WTC11 (cell line): ENCODE measurements at regions of chr3 and their contacts with region 1.

Region 1: GRCh38 chr3:137110484-137110883 is 152.7 kb downstream of the IL20RB start:
- DNase-seq: no peak
- ATAC-seq: peak; percentile 61
- H3K4me3 Mint-ChIP-seq: no peak overlapping the region
- H3K27ac Mint-ChIP-seq: no peak overlapping the region
- H3K4me1 Mint-ChIP-seq: peaks cover 30% of the 10 kb centered on the region
- H3K27me3 Mint-ChIP-seq: no peaks in the 10 kb centered on the region
- CTCF ChIP-seq: peak; percentile 71

Region 2: DNA sequence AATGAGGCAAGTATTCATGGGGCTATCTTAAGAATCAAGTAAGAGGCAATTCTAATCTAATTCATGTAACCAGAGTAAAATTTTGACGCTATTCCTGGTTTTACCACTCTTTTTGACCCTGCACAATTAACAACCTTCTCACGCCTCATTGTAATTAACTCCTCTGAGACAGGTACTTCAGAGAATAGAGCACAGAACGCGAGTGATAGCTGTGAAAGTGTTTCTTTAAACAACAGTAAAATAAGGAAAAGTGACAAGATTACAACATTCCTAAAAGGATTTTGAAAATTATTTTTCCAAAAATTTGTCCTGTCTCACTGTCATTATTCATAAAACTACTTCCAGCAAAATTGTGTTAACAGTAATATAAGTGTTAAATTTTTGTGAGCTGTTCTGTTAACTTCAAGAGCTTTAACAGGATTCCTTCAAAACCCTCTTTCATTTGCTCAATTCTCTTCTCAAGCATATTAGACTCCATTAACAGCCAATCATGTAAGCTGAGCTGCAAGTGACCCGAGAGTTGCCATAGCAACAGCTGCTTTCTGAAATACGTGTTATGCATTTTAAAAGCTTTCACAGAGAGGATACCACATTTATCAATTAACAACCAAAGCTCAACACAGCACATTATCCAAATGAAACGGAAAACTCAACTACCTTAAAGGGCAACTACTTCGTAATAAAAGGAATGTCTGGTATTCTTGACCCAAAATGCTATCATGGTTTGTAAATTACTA is 451.4 kb before region 1 on chr3:
- CTCF ChIA-PET with region 1: no interaction called
- POLR2A ChIA-PET with region 1: no interaction called
- DNase-seq: no peak
- ATAC-seq: no peak
- H3K4me3 Mint-ChIP-seq: no peak overlapping the region
- H3K27ac Mint-ChIP-seq: no peak overlapping the region
- H3K4me1 Mint-ChIP-seq: peaks cover 13% of the 10 kb centered on the region
- H3K27me3 Mint-ChIP-seq: no peaks in the 10 kb centered on the region
- CTCF ChIP-seq: no peak

Region 3: DNA sequence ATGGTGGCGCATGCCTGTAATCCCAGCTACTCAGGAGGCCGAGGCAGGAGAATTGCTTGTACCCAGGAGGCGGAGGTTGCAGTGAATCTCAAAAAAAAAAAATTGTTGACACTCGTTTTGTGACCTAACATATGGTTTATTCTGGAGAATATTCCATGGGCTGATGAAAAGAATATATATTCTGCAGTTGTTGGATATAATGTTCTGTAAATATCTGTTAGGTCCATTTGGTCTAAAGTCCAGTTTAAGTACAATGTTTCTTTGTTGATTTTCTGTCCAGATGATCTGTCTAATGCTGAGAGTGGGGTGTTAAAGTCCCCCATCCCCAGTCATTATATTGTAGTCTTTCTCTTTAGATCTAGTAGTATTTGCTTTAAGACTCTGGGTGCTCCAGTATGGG is 137.1 kb before region 1 on chr3:
- CTCF ChIA-PET with region 1: no interaction called
- POLR2A ChIA-PET with region 1: no interaction called
- DNase-seq: no peak
- ATAC-seq: no peak
- H3K4me3 Mint-ChIP-seq: no peak overlapping the region
- H3K27ac Mint-ChIP-seq: no peak overlapping the region
- H3K4me1 Mint-ChIP-seq: peaks cover 5% of the 10 kb centered on the region
- H3K27me3 Mint-ChIP-seq: no peaks in the 10 kb centered on the region
- CTCF ChIP-seq: no peak

Region 4: GRCh38 chr3:137032465-137033120 is 77.9 kb before region 1 on chr3:
- CTCF ChIA-PET with region 1: interaction called, 33 read pairs
- POLR2A ChIA-PET with region 1: no interaction called
- DNase-seq: peak; percentile 98
- ATAC-seq: peak; percentile 75
- H3K4me3 Mint-ChIP-seq: peak overlapping the region; percentile 70
- H3K27ac Mint-ChIP-seq: 0 out of 2 replicates have a peak overlapping the region, but pooled peaks have one; percentile 11
- H3K4me1 Mint-ChIP-seq: peaks cover 29% of the 10 kb centered on the region
- H3K27me3 Mint-ChIP-seq: peaks cover 30% of the 10 kb centered on the region
- CTCF ChIP-seq: peak; percentile 96

Region 5: GRCh38 chr3:137121704-137122314 is 11.3 kb after region 1 on chr3:
- CTCF ChIA-PET with region 1: interaction called, 32 read pairs
- POLR2A ChIA-PET with region 1: no interaction called
- DNase-seq: peak; percentile 58
- ATAC-seq: peak; percentile 95
- H3K4me3 Mint-ChIP-seq: no peak overlapping the region
- H3K27ac Mint-ChIP-seq: no peak overlapping the region
- H3K4me1 Mint-ChIP-seq: peaks cover 2% of the 10 kb centered on the region
- H3K27me3 Mint-ChIP-seq: no peaks in the 10 kb centered on the region
- CTCF ChIP-seq: peak; percentile 65

Region 6: DNA sequence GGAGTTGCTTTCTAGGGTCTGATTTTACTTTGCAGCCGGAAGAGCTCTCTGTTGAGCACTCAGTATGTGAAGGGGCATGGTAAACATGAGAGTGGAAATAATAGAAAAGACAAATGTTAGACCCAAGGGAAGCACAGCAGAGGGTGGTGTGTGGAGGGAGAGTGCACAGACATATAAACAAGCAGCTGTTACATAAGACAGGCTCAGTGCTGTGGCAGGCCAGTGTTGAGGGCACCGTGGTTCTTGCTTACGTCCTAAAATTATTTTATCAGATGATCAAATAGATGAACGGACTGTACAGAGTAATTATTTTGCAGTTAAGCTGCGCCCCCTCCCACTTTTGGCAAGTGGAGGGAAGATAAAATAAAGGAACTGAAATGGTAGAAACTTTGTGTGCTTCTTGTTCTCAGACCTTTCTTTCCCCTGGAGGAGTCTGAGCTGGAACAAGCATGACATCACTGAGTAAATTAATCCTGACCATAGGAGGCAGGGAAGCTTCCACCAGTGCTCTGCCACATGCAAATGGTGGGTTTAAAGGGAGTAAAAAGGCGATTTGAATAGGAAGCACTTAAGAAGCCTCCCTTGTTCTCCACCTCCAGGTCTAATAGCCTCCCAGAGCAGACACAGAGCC is 52.9 kb after region 1 on chr3:
- CTCF ChIA-PET with region 1: interaction called, 12 read pairs
- POLR2A ChIA-PET with region 1: no interaction called
- DNase-seq: no peak
- ATAC-seq: peak; percentile 96
- H3K4me3 Mint-ChIP-seq: no peak overlapping the region
- H3K27ac Mint-ChIP-seq: peak overlapping the region; percentile 47
- H3K4me1 Mint-ChIP-seq: peaks cover 30% of the 10 kb centered on the region
- H3K27me3 Mint-ChIP-seq: no peaks in the 10 kb centered on the region
- CTCF ChIP-seq: no peak

Region 7: DNA sequence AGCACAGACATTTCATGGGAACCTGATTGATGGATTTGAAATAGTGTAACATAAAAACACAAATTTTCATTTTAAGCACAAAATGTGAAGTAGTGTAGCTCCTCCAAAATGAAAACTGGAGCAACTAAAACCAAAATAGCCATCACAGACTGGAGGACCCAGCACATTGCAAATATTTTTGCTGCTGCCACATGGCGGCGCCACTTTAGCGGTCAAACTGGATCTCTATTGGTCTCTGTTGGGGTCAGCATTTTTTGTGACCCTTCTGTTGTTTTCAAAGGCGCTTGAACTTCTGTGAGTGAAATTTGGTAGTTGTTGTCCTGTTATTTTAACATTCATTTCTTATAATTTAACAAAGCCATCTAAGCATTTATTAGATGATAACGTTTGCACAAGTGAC is 107.2 kb after region 1 on chr3:
- CTCF ChIA-PET with region 1: interaction called, 12 read pairs
- POLR2A ChIA-PET with region 1: no interaction called
- DNase-seq: peak; percentile 67
- ATAC-seq: peak; percentile 90
- H3K4me3 Mint-ChIP-seq: no peak overlapping the region
- H3K27ac Mint-ChIP-seq: no peak overlapping the region
- H3K4me1 Mint-ChIP-seq: peaks cover 4% of the 10 kb centered on the region; the same call in 1 of the 2 replicates
- H3K27me3 Mint-ChIP-seq: no peaks in the 10 kb centered on the region; the same call in 1 of the 2 replicates
- CTCF ChIP-seq: peak; percentile 39; the same call in 1 of the 2 replicates

Region 8: DNA sequence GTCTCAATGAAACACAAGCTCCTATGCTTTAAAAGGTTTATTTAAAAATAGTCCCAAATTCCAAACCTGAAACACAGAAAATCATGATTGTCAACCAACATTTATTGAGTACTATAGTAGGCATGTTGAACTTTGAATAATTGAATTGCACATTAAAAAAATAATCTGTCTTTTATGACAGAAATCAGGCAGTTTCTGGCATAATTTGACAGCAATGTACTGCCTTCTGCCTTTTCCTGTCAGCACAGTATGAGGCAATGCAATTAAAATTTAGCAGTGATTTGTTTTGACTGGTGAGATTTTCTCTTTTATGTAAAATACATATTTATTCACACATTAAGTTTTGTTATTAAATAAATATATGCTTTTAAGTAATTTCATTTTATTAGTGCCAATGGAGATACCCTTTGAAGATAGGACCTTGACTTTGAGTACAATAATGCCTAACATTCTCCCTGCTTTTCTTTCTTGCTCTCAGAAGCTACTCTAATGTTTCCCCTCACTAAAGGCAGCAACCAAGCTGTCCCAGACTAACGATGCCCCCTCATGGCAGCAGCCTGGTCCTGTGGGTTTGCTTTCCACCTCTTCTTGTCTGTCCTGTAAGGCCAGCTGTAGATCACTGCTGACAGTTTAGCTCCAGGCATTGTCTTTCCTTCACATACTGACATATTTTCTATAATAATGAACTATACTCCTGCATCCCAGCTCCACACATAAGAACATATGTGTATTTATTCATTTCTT is 194.0 kb after region 1 on chr3:
- CTCF ChIA-PET with region 1: interaction called, 20 read pairs
- POLR2A ChIA-PET with region 1: no interaction called
- DNase-seq: peak; percentile 54
- ATAC-seq: peak; percentile 64
- H3K4me3 Mint-ChIP-seq: no peak overlapping the region
- H3K27ac Mint-ChIP-seq: no peak overlapping the region
- H3K4me1 Mint-ChIP-seq: no peaks in the 10 kb centered on the region
- H3K27me3 Mint-ChIP-seq: no peaks in the 10 kb centered on the region
- CTCF ChIP-seq: no peak

Region 9: DNA sequence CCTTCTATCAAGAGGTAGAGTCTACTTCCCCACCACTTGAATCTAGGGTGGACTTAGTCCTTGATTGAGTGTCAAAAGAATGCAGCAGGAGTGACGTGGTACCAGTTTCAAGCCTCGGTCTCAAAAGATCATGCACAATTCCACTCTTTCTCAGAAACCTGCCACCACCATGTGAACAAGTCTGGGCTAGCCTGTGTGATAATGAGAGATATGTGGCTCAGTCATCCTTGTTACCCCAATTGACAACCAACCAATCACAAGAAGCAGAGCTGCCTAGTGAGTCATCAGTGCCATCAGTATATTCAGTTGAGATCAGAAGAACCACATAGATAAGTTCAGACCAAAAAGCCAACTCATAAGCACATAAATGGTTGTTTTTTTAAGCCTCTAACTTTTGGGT is 221.8 kb after region 1 on chr3:
- CTCF ChIA-PET with region 1: no interaction called
- POLR2A ChIA-PET with region 1: no interaction called
- DNase-seq: no peak
- ATAC-seq: no peak
- H3K4me3 Mint-ChIP-seq: no peak overlapping the region
- H3K27ac Mint-ChIP-seq: no peak overlapping the region
- H3K4me1 Mint-ChIP-seq: peaks cover 19% of the 10 kb centered on the region
- H3K27me3 Mint-ChIP-seq: no peaks in the 10 kb centered on the region; the same call in 1 of the 2 replicates
- CTCF ChIP-seq: no peak